Left ventricle myocardium superior (tissue), 1 donor: ENCODE measurements at regions of chr15 and their contacts with region 1.

Region 1: DNA sequence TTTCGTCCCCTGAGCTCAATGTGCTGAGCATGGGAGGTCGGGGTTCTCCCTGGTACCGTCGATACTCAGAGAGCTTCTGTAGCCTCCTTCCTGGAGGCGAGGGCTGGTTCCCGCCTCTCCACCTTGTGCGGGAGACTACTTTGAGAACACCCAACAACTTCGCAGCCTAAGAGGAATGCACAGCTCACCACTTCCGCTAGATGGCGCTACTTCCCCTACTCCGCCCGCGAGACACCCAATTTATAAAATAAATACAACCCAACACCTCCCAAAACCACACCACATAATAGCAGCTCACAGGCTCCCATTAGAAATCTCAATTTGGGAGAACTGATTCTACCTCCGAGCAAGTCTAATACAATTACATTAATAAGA is 1.2 kb downstream of the RGMA start:
- DNase-seq: peak; percentile 82
- ATAC-seq: peak; percentile 72

Region 2: DNA sequence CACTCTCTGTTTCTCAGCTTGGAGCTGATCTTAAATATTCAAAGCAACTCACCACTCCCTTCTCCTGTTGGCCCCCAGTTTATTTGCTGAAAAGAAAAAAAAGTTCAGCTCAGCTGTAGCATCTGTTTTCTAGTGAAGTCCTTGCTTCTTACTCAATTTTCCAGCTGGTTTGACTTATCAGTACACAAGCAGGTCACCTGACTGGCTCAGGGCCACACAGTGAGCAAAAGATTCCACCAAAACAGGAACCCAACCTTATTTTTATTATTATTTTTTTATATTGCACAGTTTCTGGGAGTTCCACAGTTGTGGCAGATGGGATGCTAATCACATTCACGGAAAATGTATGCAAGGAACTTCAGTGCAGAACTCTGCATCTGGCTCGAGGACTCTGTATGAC is 391.9 kb after region 1 on chr15:
- intact Hi-C with region 1: loop called (anchors 10 kb)
- DNase-seq: peak; percentile 65
- ATAC-seq: peak; percentile 83